ENCODE measurements at regions of chr4 and their contacts with region 1.

Region 1: GRCh38 chr4:82890901-82891706 is at the start of gene SEC31A:
- DNase-seq: peak; percentile 98 to 99 (median 99)
- ATAC-seq: peak; percentile 99
- H3K4me3 ChIP-seq: peak within 1 kb of the TSS; percentile 74
- H3K27ac ChIP-seq: peak within 1 kb of the TSS; percentile 96
- H3K4me1 ChIP-seq: no peaks in the 10 kb centered on the region
- H3K27me3 ChIP-seq: no peaks in the 10 kb centered on the region
- total RNA-seq, gene SEC31A: 107 to 156 (median 128) TPM

Region 2: GRCh38 chr4:82360298-82361177 is 530.6 kb before region 1 on chr4:
- intact Hi-C with region 1: loop called in 1 of 4 experiments (anchors 10 kb)
- DNase-seq: no peak
- ATAC-seq: peak; percentile 60 to 63
- H3K4me3 ChIP-seq: no peak overlapping the region
- H3K27ac ChIP-seq: no peak overlapping the region
- H3K4me1 ChIP-seq: peaks cover 6% of the 10 kb centered on the region
- H3K27me3 ChIP-seq: no peaks in the 10 kb centered on the region

Region 3: DNA sequence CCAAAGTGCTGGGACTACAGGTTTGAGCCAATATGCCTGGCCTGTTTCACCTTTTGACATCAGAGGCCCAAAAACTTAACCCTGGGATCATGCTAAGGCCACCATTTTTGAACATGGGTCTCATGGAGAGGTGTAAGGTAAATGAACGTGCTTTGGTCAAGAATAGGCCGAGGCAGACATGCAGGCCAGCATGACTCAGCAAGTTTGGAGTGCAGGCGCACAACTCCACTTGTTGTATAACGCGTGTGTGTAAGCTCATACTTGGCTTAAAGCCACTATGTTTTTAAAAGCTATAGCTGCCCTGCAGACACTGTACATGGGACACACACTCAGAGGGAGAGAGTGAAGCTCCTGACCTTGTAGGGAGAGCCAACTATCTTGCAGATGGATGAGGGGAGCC is 487.3 kb after region 1 on chr4:
- intact Hi-C with region 1: no loop called
- DNase-seq: no peak
- ATAC-seq: no peak
- H3K4me3 ChIP-seq: no peak overlapping the region
- H3K27ac ChIP-seq: no peak overlapping the region
- H3K4me1 ChIP-seq: no peaks in the 10 kb centered on the region
- H3K27me3 ChIP-seq: no peaks in the 10 kb centered on the region